ENCODE measurements at regions of chr2 and their contacts with region 1.

Region 1: GRCh38 chr2:83196225-83196624 is 1262.9 kb downstream of the SUCLG1 start:
- DNase-seq: peak; percentile 12
- ATAC-seq: 0 out of 2 replicates have a peak, but pooled peaks have one; percentile 42
- H3K4me3 ChIP-seq: no peak overlapping the region
- H3K27ac ChIP-seq: no peak overlapping the region
- H3K4me1 ChIP-seq: no peaks in the 10 kb centered on the region
- H3K27me3 ChIP-seq: no peaks in the 10 kb centered on the region
- CTCF ChIP-seq: peak; percentile 64; the same call in 1 of the 2 replicates

Region 2: DNA sequence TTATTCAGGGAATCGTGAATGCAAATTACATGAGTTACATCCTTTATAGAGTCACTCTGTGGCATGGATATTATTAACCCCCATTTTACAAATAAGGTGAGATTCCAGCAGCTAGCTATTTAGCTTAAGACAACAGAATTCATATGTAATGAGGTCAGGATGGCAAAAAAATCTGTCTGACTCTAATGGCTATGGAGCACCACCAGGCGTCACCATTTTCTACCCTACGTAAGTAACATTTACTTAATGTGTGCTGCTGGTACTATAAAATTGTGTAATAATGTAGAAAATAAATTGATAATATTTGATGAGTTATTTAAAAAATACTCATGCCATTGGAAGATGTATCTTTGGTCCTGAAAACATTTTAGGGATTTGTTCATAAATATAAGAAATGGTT is 851.6 kb before region 1 on chr2:
- CTCF ChIA-PET with region 1: no interaction called
- POLR2A ChIA-PET with region 1: no interaction called
- in situ Hi-C with region 1: no loop called
- intact Hi-C with region 1: loop called (anchors 10 kb)
- DNase-seq: peak; percentile 20
- ATAC-seq: no peak
- H3K4me3 ChIP-seq: no peak overlapping the region
- H3K27ac ChIP-seq: no peak overlapping the region
- H3K4me1 ChIP-seq: no peaks in the 10 kb centered on the region
- H3K27me3 ChIP-seq: no peaks in the 10 kb centered on the region
- CTCF ChIP-seq: peak; percentile 46; the same call in 1 of the 2 replicates

Region 3: DNA sequence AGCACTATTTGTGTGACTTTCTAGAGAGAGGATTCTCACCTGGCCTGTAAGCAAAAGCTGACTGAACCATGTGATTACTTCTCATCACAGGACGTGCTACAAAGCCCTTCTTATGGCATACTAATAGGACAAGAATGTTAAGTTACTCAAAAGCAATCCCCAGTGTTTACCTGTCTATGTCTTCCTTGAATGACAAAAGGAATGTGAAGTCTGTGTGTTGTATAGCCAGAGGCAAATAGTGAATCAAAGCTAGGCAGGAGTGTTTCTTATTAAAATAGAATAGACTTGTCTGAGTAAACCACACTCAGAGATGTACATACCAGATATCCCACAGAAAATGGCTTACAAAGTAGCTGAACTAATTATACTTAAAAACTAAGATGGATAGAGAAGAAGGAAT is 202.6 kb before region 1 on chr2:
- CTCF ChIA-PET with region 1: no interaction called
- POLR2A ChIA-PET with region 1: no interaction called
- in situ Hi-C with region 1: no loop called
- intact Hi-C with region 1: no loop called
- DNase-seq: peak; percentile 27
- ATAC-seq: no peak
- H3K4me3 ChIP-seq: no peak overlapping the region
- H3K27ac ChIP-seq: no peak overlapping the region
- H3K4me1 ChIP-seq: no peaks in the 10 kb centered on the region
- H3K27me3 ChIP-seq: no peaks in the 10 kb centered on the region
- CTCF ChIP-seq: no peak